ENCODE measurements at regions of chr10 and their contacts with region 1.

Region 1: GRCh38 chr10:63166742-63167258 is 33.7 kb downstream of the NRBF2 start:
- DNase-seq: peak; percentile 33
- ATAC-seq: peak; percentile 78
- H3K4me3 ChIP-seq: no peak overlapping the region
- H3K27ac ChIP-seq: no peak overlapping the region
- H3K4me1 ChIP-seq: no peaks in the 10 kb centered on the region
- H3K27me3 ChIP-seq: no peaks in the 10 kb centered on the region
- CTCF ChIP-seq: peak; percentile 63 to 72 (median 66)
- EP300 ChIP-seq: no peak
- POLR2A ChIP-seq: no peak
- RAD21 ChIP-seq: peak; percentile 80

Region 2: GRCh38 chr10:62938672-62939071 is 228.1 kb before region 1 on chr10:
- CTCF ChIA-PET with region 1: no interaction called
- POLR2A ChIA-PET with region 1: no interaction called
- RAD21 ChIA-PET with region 1: no interaction called
- SMC1A ChIA-PET with region 1: no interaction called
- in situ Hi-C with region 1: no loop called
- intact Hi-C with region 1: no loop called
- DNase-seq: no peak
- ATAC-seq: no peak
- H3K4me3 ChIP-seq: no peak overlapping the region
- H3K27ac ChIP-seq: no peak overlapping the region
- H3K4me1 ChIP-seq: no peaks in the 10 kb centered on the region
- H3K27me3 ChIP-seq: no peaks in the 10 kb centered on the region
- CTCF ChIP-seq: no peak
- EP300 ChIP-seq: no peak
- POLR2A ChIP-seq: no peak
- RAD21 ChIP-seq: no peak

Region 3: DNA sequence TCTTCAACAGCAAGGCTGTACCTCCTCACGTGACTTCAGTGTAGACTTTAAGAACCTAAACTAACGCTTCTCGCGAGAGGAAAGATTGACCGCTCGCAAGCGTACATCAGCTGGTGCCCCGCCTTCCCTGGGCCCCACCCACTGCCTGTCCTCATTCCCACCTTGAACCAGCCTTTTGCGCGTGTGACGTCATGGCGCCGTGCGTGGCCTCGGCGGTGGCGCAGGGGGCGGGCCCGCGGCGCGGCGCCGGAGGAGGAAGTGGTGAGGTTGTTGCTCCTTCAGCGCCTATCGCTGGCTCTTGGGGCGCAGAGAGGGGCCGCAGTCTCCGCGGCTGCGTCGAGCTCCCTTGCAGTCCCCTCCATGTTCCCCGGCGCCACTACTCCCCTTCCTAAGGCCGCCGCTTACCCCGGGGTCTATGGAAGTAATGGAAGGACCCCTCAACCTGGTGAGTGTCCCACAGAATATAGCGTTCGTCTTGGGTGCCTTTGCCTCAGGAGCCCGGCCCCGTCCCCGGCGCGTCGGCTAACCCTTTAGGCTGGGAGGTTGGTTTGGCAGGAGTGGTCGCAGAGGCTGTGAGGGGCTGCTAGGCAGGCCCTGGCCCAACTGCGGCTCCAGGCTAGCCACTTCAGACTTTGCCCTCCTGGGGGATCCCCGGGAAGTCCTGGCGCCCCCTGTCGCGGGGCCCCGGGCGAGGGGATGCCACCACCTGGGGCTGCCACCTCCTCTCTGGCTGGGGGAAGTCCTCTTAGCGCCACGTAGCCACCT is 33.6 kb before region 1 on chr10 and contains the start of gene NRBF2:
- CTCF ChIA-PET with region 1: interaction called, 12 read pairs
- POLR2A ChIA-PET with region 1: no interaction called
- RAD21 ChIA-PET with region 1: interaction called, 14 read pairs
- SMC1A ChIA-PET with region 1: interaction called, 5 read pairs
- in situ Hi-C with region 1: no loop called
- intact Hi-C with region 1: no loop called
- DNase-seq: peak; percentile 96
- ATAC-seq: peak; percentile 93
- H3K4me3 ChIP-seq: peak within 1 kb of the TSS; percentile 89
- H3K27ac ChIP-seq: peak within 1 kb of the TSS; percentile 94
- H3K4me1 ChIP-seq: peaks cover 6% of the 10 kb centered on the region
- H3K27me3 ChIP-seq: no peaks in the 10 kb centered on the region
- CTCF ChIP-seq: peak in 2 of 3 experiments; percentile 32 to 42; a peak in 3 of 6 replicates
- EP300 ChIP-seq: no peak
- POLR2A ChIP-seq: peak; percentile 99
- RAD21 ChIP-seq: no peak
- polyA plus RNA-seq, gene NRBF2: 33.2 to 35.0 TPM

Region 4: GRCh38 chr10:63197344-63198106 is 30.7 kb after region 1 on chr10:
- CTCF ChIA-PET with region 1: interaction called, 25 read pairs
- POLR2A ChIA-PET with region 1: no interaction called
- RAD21 ChIA-PET with region 1: interaction called, 8 read pairs
- SMC1A ChIA-PET with region 1: interaction called, 11 read pairs
- in situ Hi-C with region 1: no loop called
- intact Hi-C with region 1: no loop called
- DNase-seq: no peak
- ATAC-seq: no peak
- H3K4me3 ChIP-seq: no peak overlapping the region
- H3K27ac ChIP-seq: no peak overlapping the region
- H3K4me1 ChIP-seq: no peaks in the 10 kb centered on the region
- H3K27me3 ChIP-seq: no peaks in the 10 kb centered on the region
- CTCF ChIP-seq: no peak
- EP300 ChIP-seq: no peak
- POLR2A ChIP-seq: no peak
- RAD21 ChIP-seq: no peak

Region 5: GRCh38 chr10:63217120-63217605 is 50.4 kb after region 1 on chr10:
- CTCF ChIA-PET with region 1: interaction called, 29 read pairs
- POLR2A ChIA-PET with region 1: no interaction called
- RAD21 ChIA-PET with region 1: interaction called, 33 read pairs
- SMC1A ChIA-PET with region 1: interaction called, 36 read pairs
- in situ Hi-C with region 1: no loop called
- intact Hi-C with region 1: no loop called
- DNase-seq: no peak
- ATAC-seq: peak; percentile 86
- H3K4me3 ChIP-seq: no peak overlapping the region
- H3K27ac ChIP-seq: peak overlapping the region; percentile 39; the same call in 1 of the 2 replicates
- H3K4me1 ChIP-seq: peaks cover 5% of the 10 kb centered on the region; the same call in 1 of the 2 replicates
- H3K27me3 ChIP-seq: no peaks in the 10 kb centered on the region
- CTCF ChIP-seq: peak; percentile 43 to 67 (median 47); a peak in 5 of 6 replicates
- EP300 ChIP-seq: no peak
- POLR2A ChIP-seq: no peak
- RAD21 ChIP-seq: peak; percentile 76

Region 6: DNA sequence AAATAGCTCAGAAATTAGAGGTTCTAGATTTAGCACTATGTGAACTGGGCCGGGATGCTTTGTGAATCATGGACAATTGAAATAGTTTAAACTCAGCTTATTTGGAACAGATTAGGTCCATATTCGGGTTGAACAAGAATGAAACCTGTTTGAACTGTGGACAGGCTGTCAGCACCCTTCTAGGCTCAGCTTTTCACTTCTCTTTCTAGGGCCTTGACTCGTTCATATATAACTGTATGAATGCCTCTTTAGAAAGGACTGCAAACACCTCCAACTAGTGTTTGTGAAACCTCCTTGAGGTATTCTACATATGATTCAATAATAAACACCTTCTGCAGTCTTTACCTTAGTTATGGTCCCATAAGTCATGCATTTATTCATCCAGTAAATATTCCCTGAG is 470.0 kb after region 1 on chr10:
- CTCF ChIA-PET with region 1: interaction called, 188 read pairs
- POLR2A ChIA-PET with region 1: no interaction called
- RAD21 ChIA-PET with region 1: interaction called, 7 read pairs
- SMC1A ChIA-PET with region 1: interaction called, 107 read pairs
- in situ Hi-C with region 1: no loop called
- intact Hi-C with region 1: no loop called
- DNase-seq: no peak
- ATAC-seq: peak; percentile 86
- H3K4me3 ChIP-seq: no peak overlapping the region
- H3K27ac ChIP-seq: no peak overlapping the region
- H3K4me1 ChIP-seq: no peaks in the 10 kb centered on the region; the same call in 1 of the 2 replicates
- H3K27me3 ChIP-seq: no peaks in the 10 kb centered on the region
- CTCF ChIP-seq: no peak
- EP300 ChIP-seq: no peak
- POLR2A ChIP-seq: no peak
- RAD21 ChIP-seq: no peak

Region 7: GRCh38 chr10:63767138-63767801 is 600.5 kb after region 1 on chr10:
- CTCF ChIA-PET with region 1: interaction called, 22 read pairs
- POLR2A ChIA-PET with region 1: no interaction called
- RAD21 ChIA-PET with region 1: no interaction called
- SMC1A ChIA-PET with region 1: interaction called, 9 read pairs
- in situ Hi-C with region 1: no loop called
- intact Hi-C with region 1: no loop called
- DNase-seq: no peak
- ATAC-seq: peak; percentile 36; the same call in 1 of the 3 replicates
- H3K4me3 ChIP-seq: no peak overlapping the region
- H3K27ac ChIP-seq: no peak overlapping the region
- H3K4me1 ChIP-seq: no peaks in the 10 kb centered on the region
- H3K27me3 ChIP-seq: no peaks in the 10 kb centered on the region; a peak in 1 of 4 replicates
- CTCF ChIP-seq: peak in 2 of 3 experiments; percentile 10 to 33; a peak in 1 of 6 replicates
- EP300 ChIP-seq: no peak
- POLR2A ChIP-seq: no peak
- RAD21 ChIP-seq: peak; percentile 52